Prostate gland (tissue), 2 donors: ENCODE measurements at regions of chr3 and their contacts with region 1.

Region 1: DNA sequence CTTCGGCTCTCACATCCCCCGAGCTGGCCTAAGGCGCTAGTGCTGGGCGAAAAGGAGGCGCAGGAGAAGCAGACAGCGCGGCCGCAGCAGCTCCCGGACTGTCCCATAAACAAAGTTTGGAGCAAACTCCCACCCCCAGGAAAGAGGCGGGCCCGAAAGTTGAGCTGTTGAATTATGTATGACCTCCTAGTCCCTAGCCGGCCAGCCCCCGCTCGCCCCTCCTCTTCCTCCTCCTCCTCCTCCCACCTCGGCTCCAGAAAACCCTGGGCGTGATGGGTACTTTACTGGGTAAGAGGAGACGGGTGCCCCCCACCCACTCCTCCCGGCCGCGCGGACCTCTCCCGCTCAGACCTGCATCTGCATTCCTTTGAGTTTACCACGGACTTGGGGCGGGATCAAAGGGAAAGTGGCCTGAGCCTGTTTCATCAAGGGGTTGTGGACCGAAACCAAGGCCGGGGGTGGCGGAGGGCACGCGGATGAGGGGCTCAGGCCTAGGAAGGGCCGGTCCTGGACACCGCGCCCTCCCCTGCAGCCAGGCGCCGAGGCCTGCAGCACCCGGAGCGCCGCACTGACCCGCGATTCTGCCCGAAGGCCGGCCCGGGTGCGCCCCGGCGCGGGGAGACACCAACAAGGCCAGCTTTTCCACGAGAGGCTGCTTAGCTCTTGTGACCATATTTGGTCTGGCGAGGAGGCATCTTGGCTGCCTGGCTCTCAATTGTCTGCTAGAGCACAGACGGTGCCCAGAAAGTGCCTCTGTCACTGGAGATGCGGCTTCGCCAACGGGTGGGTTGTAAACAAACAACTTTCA is at the start of gene WWTR1:
- DNase-seq: peak; percentile 98
- H3K4me3 ChIP-seq: peak within 1 kb of the TSS; percentile 65 to 72
- H3K27ac ChIP-seq: peak within 1 kb of the TSS; percentile 99
- H3K4me1 ChIP-seq: no peaks in the 10 kb centered on the region
- H3K27me3 ChIP-seq: no peaks in the 10 kb centered on the region
- CTCF ChIP-seq: peak in 1 of 4 experiments; percentile 40
- POLR2A ChIP-seq: peak; percentile 98
- total RNA-seq, gene WWTR1: 47.5 to 79.4 TPM

Region 2: DNA sequence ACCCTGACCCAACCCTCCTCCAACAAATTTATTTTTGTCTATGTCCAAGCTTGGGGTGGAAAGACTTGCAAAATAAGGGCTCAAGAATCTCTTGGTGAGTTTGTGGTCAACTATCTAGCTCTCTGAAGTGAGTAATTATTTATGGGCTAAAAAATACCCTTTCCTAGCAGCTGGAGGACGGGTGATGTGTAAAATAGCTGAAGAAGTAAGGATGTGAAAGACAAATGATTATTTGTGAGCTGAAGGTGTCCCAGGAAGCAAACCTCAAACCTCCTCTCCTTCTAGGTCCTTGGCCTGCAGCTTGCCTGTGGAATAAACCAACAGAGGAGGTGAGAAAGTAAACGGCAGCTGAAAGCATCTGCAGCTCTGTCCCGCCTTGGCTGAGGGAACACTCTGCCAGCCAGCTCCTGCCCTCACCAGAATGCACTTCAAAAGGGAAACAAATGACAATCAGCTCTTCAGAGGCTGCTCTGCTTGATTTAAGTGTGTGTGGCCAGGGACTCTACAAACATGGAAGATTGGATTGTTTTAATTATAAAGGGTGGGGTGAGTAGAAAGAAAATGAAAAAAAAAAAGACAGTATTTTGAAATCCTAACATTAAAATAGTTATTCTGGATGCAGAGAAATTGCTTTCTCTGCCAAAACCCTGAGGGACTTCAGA is 123.3 kb before region 1 on chr3:
- intact Hi-C with region 1: loop called (anchors 5 kb)
- DNase-seq: peak; percentile 55
- H3K4me3 ChIP-seq: no peak overlapping the region
- H3K27ac ChIP-seq: peak overlapping the region in 1 of 2 donors; percentile 24
- H3K4me1 ChIP-seq: no peaks in the 10 kb centered on the region
- H3K27me3 ChIP-seq: no peaks in the 10 kb centered on the region
- CTCF ChIP-seq: no peak
- POLR2A ChIP-seq: no peak

Region 3: GRCh38 chr3:149553781-149554451 is 104.2 kb before region 1 on chr3:
- intact Hi-C with region 1: no loop called
- DNase-seq: no peak
- H3K4me3 ChIP-seq: no peak overlapping the region
- H3K27ac ChIP-seq: no peak overlapping the region
- H3K4me1 ChIP-seq: peaks cover 2% of the 10 kb centered on the region
- H3K27me3 ChIP-seq: no peaks in the 10 kb centered on the region
- CTCF ChIP-seq: no peak
- POLR2A ChIP-seq: no peak

Region 4: DNA sequence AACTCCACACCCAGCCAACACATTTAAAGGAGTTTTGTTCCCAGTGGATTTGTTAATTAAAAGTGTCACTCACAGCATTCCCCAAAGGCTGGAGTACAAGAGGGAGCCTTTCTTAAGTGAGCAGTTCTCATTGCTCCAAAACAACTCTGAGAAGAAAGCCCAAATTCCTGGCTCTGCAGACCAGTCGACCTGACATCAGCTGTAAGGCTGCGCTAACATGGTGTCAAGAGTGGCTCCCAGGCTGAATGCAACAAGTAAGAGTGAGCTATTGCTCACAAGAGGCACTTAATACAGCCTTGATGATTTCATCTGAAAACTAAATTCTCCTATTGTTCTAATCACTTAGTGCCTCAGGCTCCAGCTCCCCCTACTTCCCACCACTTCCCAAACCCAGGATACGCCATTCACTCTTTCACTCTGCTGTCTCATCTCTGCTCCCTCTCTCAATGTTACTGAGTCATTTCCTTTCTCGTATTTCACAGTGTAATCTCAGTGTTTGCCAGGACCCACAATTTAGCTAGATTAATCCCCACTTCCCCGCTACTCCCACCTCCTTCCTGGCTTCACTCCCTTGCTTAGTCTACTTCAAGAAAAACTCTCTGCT is 82.1 kb before region 1 on chr3:
- intact Hi-C with region 1: loop called (anchors 5 kb)
- DNase-seq: no peak
- H3K4me3 ChIP-seq: no peak overlapping the region
- H3K27ac ChIP-seq: peak overlapping the region; percentile 40 to 44
- H3K4me1 ChIP-seq: no peaks in the 10 kb centered on the region
- H3K27me3 ChIP-seq: no peaks in the 10 kb centered on the region
- CTCF ChIP-seq: no peak
- POLR2A ChIP-seq: no peak

Region 5: DNA sequence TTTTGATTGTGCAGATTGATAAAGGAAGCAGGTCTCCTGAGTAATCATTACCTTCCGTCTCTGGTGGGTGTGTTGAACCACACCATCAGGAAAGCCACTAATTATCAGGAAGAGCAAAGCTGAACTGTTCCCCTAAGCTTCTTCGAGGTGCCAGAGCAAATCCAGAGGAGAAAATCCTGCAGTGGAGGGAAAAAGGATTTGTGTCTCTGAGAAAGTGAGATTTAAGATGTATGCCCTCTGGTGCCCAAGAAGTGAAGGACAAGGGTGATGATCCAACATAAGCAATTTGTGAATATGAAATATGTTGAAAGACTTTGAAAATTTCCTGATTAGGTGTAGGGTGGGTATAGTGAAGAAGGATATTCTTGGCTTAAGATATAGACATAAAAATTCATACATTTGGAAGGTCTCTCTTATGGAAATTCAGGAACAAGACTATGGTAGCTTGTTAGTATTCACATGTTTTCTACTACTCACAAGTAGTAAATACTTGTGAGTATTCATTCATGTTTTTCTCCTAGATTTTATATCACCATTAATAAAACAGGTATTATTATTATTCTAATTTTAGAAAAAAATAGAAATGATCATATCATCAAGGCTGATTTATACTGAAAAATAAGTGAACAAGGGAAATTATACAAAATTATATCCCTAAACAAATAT is 59.4 kb after region 1 on chr3:
- intact Hi-C with region 1: loop called (anchors 5 kb)
- DNase-seq: peak; percentile 53
- H3K4me3 ChIP-seq: no peak overlapping the region
- H3K27ac ChIP-seq: no peak overlapping the region
- H3K4me1 ChIP-seq: no peaks in the 10 kb centered on the region
- H3K27me3 ChIP-seq: no peaks in the 10 kb centered on the region
- CTCF ChIP-seq: peak in 3 of 4 experiments; percentile 74 to 88 (median 82)
- POLR2A ChIP-seq: no peak

Region 6: GRCh38 chr3:149812606-149813366 is 154.7 kb after region 1 on chr3 and contains the start of gene RNF13:
- intact Hi-C with region 1: loop called (anchors 10 kb)
- DNase-seq: peak; percentile 98
- H3K4me3 ChIP-seq: peak within 1 kb of the TSS; percentile 62 to 82
- H3K27ac ChIP-seq: peak within 1 kb of the TSS; percentile 96 to 97
- H3K4me1 ChIP-seq: no peaks in the 10 kb centered on the region
- H3K27me3 ChIP-seq: no peaks in the 10 kb centered on the region
- CTCF ChIP-seq: no peak
- POLR2A ChIP-seq: peak; percentile 66
- total RNA-seq, gene RNF13: 77.3 to 105 TPM